ENCODE measurements at regions of chr10 and their contacts with region 1.

Region 1: GRCh38 chr10:30591249-30591670 is 38.3 kb downstream of the LYZL2 start:
- DNase-seq: peak; percentile 31
- ATAC-seq: peak; percentile 82
- H3K4me3 Mint-ChIP-seq: no peak overlapping the region
- H3K27ac Mint-ChIP-seq: no peak overlapping the region
- H3K4me1 Mint-ChIP-seq: no peaks in the 10 kb centered on the region
- H3K27me3 Mint-ChIP-seq: peaks cover 5% of the 10 kb centered on the region
- CTCF ChIP-seq: peak; percentile 74

Region 2: DNA sequence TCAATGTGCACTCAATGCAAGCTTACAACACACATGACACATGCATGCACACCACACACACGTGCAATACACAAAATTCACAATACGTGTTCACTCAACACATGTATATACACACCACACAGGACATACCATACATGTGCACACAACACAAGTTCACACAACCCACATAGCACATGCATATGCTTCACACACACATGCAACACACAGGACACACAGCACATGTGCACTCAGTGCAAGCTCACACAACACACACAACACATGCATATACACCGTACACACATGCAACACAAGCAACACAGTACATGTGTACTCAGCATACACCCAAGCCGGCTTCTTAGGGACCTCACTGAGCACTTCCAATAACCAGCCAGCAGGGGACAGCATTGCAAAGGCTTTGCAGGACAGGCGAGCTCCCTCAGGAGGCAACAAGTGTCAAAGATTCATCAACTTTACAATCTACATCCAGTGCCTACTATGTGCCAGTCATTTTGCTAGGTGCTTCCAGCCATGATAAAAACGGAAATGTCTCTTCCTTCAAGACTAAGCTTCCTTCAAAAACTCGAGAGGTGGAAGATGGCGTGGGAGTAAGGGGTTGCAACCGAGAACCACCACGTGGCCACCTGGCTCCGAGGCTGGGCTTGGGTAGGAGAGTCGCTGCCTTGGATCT is 593.0 kb before region 1 on chr10:
- CTCF ChIA-PET with region 1: interaction called, 15 read pairs
- POLR2A ChIA-PET with region 1: no interaction called
- intact Hi-C with region 1: no loop called
- DNase-seq: peak; percentile 85
- ATAC-seq: peak; percentile 89
- H3K4me3 Mint-ChIP-seq: no peak overlapping the region
- H3K27ac Mint-ChIP-seq: no peak overlapping the region
- H3K4me1 Mint-ChIP-seq: peaks cover 5% of the 10 kb centered on the region
- H3K27me3 Mint-ChIP-seq: peaks cover 49% of the 10 kb centered on the region
- CTCF ChIP-seq: peak; percentile 96

Region 3: GRCh38 chr10:30070001-30070685 is 521.1 kb before region 1 on chr10:
- CTCF ChIA-PET with region 1: no interaction called
- POLR2A ChIA-PET with region 1: no interaction called
- intact Hi-C with region 1: no loop called
- DNase-seq: no peak
- ATAC-seq: no peak
- H3K4me3 Mint-ChIP-seq: no peak overlapping the region
- H3K27ac Mint-ChIP-seq: no peak overlapping the region
- H3K4me1 Mint-ChIP-seq: no peaks in the 10 kb centered on the region
- H3K27me3 Mint-ChIP-seq: peaks cover 18% of the 10 kb centered on the region
- CTCF ChIP-seq: no peak

Region 4: GRCh38 chr10:30384701-30385201 is 206.5 kb before region 1 on chr10:
- CTCF ChIA-PET with region 1: interaction called, 129 read pairs
- POLR2A ChIA-PET with region 1: no interaction called
- intact Hi-C with region 1: no loop called
- DNase-seq: peak; percentile 50
- ATAC-seq: peak; percentile 83
- H3K4me3 Mint-ChIP-seq: no peak overlapping the region
- H3K27ac Mint-ChIP-seq: no peak overlapping the region
- H3K4me1 Mint-ChIP-seq: no peaks in the 10 kb centered on the region
- H3K27me3 Mint-ChIP-seq: peaks cover 3% of the 10 kb centered on the region
- CTCF ChIP-seq: no peak

Region 5: GRCh38 chr10:30529373-30529998 is 61.8 kb before region 1 on chr10:
- CTCF ChIA-PET with region 1: interaction called, 17 read pairs
- POLR2A ChIA-PET with region 1: interaction called, 3 read pairs
- intact Hi-C with region 1: no loop called
- DNase-seq: peak; percentile 93
- ATAC-seq: peak; percentile 85
- H3K4me3 Mint-ChIP-seq: peak overlapping the region; percentile 75
- H3K27ac Mint-ChIP-seq: peak overlapping the region; percentile 96
- H3K4me1 Mint-ChIP-seq: peaks cover 62% of the 10 kb centered on the region
- H3K27me3 Mint-ChIP-seq: no peaks in the 10 kb centered on the region
- CTCF ChIP-seq: no peak

Region 6: GRCh38 chr10:30562787-30563186 is 28.5 kb before region 1 on chr10:
- CTCF ChIA-PET with region 1: interaction called, 21 read pairs
- POLR2A ChIA-PET with region 1: no interaction called
- intact Hi-C with region 1: no loop called
- DNase-seq: peak; percentile 58
- ATAC-seq: peak; percentile 72
- H3K4me3 Mint-ChIP-seq: no peak overlapping the region
- H3K27ac Mint-ChIP-seq: no peak overlapping the region
- H3K4me1 Mint-ChIP-seq: no peaks in the 10 kb centered on the region
- H3K27me3 Mint-ChIP-seq: peaks cover 10% of the 10 kb centered on the region
- CTCF ChIP-seq: no peak

Region 7: GRCh38 chr10:30639946-30640786 is 48.9 kb after region 1 on chr10:
- CTCF ChIA-PET with region 1: interaction called, 18 read pairs
- POLR2A ChIA-PET with region 1: no interaction called
- intact Hi-C with region 1: no loop called
- DNase-seq: peak; percentile 33
- ATAC-seq: peak; percentile 26
- H3K4me3 Mint-ChIP-seq: no peak overlapping the region
- H3K27ac Mint-ChIP-seq: no peak overlapping the region
- H3K4me1 Mint-ChIP-seq: peaks cover 4% of the 10 kb centered on the region
- H3K27me3 Mint-ChIP-seq: peaks cover 28% of the 10 kb centered on the region
- CTCF ChIP-seq: peak; percentile 88

Region 8: GRCh38 chr10:30701451-30702173 is 110.4 kb after region 1 on chr10:
- CTCF ChIA-PET with region 1: no interaction called
- POLR2A ChIA-PET with region 1: no interaction called
- intact Hi-C with region 1: no loop called
- DNase-seq: peak; percentile 94
- ATAC-seq: peak; percentile 77
- H3K4me3 Mint-ChIP-seq: peak overlapping the region; percentile 91
- H3K27ac Mint-ChIP-seq: peak overlapping the region; percentile 98
- H3K4me1 Mint-ChIP-seq: peaks cover 79% of the 10 kb centered on the region
- H3K27me3 Mint-ChIP-seq: no peaks in the 10 kb centered on the region
- CTCF ChIP-seq: no peak